H1 (cell line): ENCODE measurements at regions of chr21 and their contacts with region 1.

Region 1: DNA sequence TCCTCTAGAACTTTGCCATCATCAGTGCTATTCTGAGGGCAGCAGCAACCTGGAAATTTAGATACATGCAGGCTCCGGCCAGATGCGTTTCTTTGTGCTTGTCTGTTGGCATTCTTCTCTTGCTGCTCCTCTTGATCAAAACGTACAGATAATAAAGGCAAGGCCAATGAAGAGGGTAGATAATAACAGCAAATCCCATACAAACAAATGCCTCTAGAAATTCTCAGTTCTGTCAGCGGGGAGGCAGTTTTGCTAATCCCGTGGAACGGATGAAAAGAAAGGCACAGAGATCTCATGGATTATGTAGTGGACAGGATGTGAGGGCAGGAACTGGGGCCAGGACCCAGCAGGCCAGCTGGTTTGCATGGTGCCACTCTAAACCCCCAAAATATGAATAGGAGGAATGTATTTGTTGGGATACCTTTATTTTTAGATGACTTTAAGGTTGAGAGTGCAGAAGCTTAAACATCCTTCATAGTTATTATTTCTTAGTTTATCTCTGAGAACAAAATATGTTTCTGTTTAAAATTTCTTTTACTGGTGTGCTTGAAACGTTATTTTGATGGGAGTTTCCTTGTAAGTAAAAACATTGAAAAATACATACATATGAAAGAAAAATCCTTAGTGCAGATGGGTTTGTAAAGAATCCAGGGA is 1.5 kb downstream of the ITSN1 start:
- DNase-seq: no peak
- H3K4me3 ChIP-seq: peak overlapping the region; percentile 68 to 84 (median 76)
- H3K27ac ChIP-seq: no peak overlapping the region
- H3K4me1 ChIP-seq: peaks cover 0 to 4% (median 0%) of the 10 kb centered on the region in 4 experiments; a peak in 2 of 7 replicates
- H3K27me3 ChIP-seq: no peaks in the 10 kb centered on the region
- CTCF ChIP-seq: no peak
- EP300 ChIP-seq: no peak
- POLR2A ChIP-seq: no peak
- RAD21 ChIP-seq: no peak

Region 2: GRCh38 chr21:33655591-33656221 is 11.9 kb after region 1 on chr21:
- CTCF ChIA-PET with region 1: no interaction called
- POLR2A ChIA-PET with region 1: interaction called, 10 read pairs
- DNase-seq: no peak
- H3K4me3 ChIP-seq: no peak overlapping the region
- H3K27ac ChIP-seq: no peak overlapping the region
- H3K4me1 ChIP-seq: peaks cover 4 to 15% (median 9%) of the 10 kb centered on the region in 4 experiments; a peak in 6 of 7 replicates
- H3K27me3 ChIP-seq: no peaks in the 10 kb centered on the region
- CTCF ChIP-seq: no peak
- EP300 ChIP-seq: no peak
- POLR2A ChIP-seq: no peak
- RAD21 ChIP-seq: no peak

Region 3: DNA sequence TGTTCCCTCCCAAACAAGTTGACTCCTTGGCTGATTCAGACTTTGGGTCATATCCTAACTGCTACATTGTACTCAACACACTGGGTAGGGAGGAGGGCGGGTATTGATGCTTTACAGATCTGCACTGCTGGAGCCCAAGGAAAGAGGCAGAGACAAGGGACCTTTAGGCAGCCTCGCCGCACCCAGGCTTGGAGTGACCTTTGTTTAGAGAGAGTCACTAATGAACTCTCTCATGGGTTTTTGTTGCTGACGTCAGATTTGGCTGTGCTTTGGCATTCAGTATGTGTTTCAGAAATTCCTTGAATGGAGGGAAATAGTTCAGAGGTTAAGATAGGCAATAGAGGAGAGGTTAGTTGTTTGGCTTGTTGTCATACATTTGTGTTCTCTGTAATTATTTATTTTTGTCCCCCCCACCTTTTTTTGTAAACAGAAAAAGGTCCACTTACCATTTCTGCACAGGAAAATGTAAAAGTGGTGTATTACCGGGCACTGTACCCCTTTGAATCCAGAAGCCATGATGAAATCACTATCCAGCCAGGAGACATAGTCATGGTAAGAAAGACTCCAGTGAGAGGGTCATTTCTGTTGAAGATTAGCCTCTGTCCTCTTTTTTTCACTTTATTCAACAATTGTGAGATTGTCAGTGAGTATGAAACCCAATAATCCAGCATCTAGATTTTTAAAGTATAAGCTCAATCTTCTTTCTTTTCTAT is 155.7 kb after region 1 on chr21:
- CTCF ChIA-PET with region 1: no interaction called
- POLR2A ChIA-PET with region 1: no interaction called
- DNase-seq: no peak
- H3K4me3 ChIP-seq: no peak overlapping the region
- H3K27ac ChIP-seq: no peak overlapping the region
- H3K4me1 ChIP-seq: peaks cover 0 to 10% (median 2%) of the 10 kb centered on the region in 4 experiments; a peak in 3 of 7 replicates
- H3K27me3 ChIP-seq: no peaks in the 10 kb centered on the region
- CTCF ChIP-seq: no peak
- EP300 ChIP-seq: no peak
- POLR2A ChIP-seq: no peak
- RAD21 ChIP-seq: no peak